ENCODE measurements at regions of chr4 and their contacts with region 1.

Region 1: DNA sequence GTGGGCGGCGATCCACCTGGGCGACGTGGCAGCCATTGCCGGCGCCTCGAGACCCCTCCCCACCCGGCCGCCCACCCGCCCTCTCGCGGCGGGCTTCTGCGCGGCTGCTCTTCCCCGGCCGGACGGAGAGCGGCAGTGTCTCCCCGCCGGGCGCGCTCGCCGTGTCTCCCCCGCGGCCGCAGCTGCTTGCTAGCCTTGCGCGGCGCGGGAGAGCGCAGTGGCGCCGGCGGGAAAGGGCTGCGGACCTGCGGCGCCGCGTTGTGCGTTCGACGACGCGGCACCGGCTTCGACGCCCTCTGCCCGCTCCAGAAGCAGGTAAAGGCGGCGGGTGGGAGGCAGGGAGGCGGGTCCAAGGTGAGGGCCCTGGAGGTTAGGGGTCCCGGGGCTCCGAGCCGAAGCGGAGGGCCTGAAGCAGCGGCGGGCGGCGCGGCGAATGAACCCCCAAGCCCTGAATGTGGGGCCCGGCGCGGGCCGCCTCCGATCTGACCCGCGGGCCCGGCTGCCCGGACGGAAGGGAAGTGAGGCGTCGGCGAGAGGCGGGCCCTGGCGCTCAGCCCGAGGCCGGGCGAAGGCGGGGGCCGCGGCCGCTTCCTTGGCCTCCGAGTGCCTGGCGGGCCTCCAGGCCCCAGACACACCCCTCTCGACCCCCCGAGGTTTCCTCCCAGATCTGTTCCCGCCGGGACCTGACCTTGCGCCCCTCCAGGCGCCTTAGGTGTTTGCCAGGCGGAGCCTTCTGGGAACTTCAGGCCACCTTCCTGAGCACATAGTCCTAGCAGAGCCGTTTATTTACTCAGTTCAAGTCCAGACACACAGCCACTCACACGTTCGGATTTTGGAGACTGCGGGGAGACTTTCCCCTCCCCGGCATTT is at the start of gene N4BP2:
- DNase-seq: peak; percentile 88
- ATAC-seq: peak; percentile 61
- H3K4me3 Mint-ChIP-seq: peak within 1 kb of the TSS; percentile 92
- H3K27ac Mint-ChIP-seq: peak within 1 kb of the TSS; percentile 100
- H3K4me1 Mint-ChIP-seq: peaks cover 30% of the 10 kb centered on the region
- H3K27me3 Mint-ChIP-seq: no peaks in the 10 kb centered on the region
- total RNA-seq, gene N4BP2: 16.2 to 23.2 TPM

Region 2: GRCh38 chr4:39205000-39205399 is 852.0 kb before region 1 on chr4:
- CTCF ChIA-PET with region 1: no interaction called
- POLR2A ChIA-PET with region 1: no interaction called
- intact Hi-C with region 1: no loop called
- DNase-seq: no peak
- ATAC-seq: no peak
- H3K4me3 Mint-ChIP-seq: no peak overlapping the region
- H3K27ac Mint-ChIP-seq: no peak overlapping the region
- H3K4me1 Mint-ChIP-seq: no peaks in the 10 kb centered on the region
- H3K27me3 Mint-ChIP-seq: no peaks in the 10 kb centered on the region

Region 3: DNA sequence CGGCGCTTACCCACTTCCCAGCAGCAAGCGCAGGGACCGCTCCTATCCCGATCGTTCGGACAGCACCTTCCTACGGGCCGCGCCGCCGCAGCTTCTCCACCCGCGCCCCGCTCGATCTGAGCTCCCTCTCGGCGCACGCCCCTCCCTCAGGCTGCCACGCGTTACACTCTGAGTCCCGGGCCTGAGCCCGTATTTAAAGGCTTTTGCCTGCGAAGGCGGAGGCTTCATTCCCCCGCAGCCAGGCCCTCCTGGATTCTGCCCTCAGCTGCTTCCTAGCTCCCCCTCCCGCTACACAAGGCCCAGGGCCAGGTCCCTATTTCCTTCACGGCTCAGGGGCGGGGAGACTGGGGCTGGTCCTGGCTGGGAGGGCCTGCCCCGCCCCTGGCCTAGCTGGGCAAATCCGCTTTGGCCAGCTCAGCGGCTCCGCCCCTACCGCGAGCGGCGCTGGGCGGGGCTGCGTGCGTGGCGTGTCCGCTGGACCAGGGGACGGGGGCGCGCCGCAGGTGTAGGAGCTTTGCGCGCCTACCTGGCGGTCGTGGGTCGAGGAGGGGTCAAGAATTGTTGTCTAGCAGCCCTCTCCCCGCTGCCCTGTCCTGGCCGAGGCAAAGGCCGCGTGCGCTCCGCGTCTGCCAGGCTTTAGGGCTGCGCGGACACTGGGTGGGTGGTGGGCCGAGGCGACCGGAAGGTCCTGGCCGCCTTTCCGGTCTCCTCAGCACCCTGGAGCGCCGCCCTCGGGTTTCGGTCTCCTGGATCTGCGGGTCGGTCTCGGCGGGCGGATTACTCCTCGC is 529.5 kb before region 1 on chr4 and contains the start of gene UGDH:
- CTCF ChIA-PET with region 1: no interaction called
- POLR2A ChIA-PET with region 1: no interaction called
- intact Hi-C with region 1: loop called in 1 of 2 experiments (anchors 2 kb)
- DNase-seq: peak; percentile 95
- ATAC-seq: peak; percentile 99
- H3K4me3 Mint-ChIP-seq: peak within 1 kb of the TSS; percentile 87
- H3K27ac Mint-ChIP-seq: peak within 1 kb of the TSS; percentile 97
- H3K4me1 Mint-ChIP-seq: peaks cover 16% of the 10 kb centered on the region
- H3K27me3 Mint-ChIP-seq: no peaks in the 10 kb centered on the region
- total RNA-seq, gene UGDH: 30.2 to 31.3 TPM

Region 4: DNA sequence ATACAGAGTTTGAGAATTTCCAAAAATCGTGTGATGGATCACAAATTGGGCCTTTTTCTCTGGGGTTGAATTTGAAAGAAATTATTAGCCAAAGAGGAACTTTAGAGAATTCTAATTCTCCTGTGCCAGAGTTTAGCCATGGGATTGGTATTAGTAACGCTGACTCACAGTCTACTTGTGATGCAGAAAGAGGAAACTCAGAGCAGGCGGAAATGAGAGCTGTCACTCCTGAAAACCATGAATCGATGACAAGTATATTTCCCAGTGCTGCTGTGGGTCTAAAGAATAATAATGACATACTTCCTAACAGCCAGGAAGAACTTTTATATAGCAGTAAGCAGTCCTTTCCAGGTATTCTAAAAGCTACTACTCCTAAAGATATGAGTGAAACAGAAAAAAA is 64.6 kb after region 1 on chr4:
- CTCF ChIA-PET with region 1: no interaction called
- POLR2A ChIA-PET with region 1: no interaction called
- intact Hi-C with region 1: loop called (anchors 2 to 5 kb)
- DNase-seq: peak; percentile 30
- ATAC-seq: peak; percentile 70
- H3K4me3 Mint-ChIP-seq: no peak overlapping the region
- H3K27ac Mint-ChIP-seq: no peak overlapping the region
- H3K4me1 Mint-ChIP-seq: peaks cover 53% of the 10 kb centered on the region
- H3K27me3 Mint-ChIP-seq: no peaks in the 10 kb centered on the region

Region 5: GRCh38 chr4:40309250-40309774 is 252.4 kb after region 1 on chr4:
- CTCF ChIA-PET with region 1: interaction called, 10 read pairs
- POLR2A ChIA-PET with region 1: interaction called, 4 read pairs
- intact Hi-C with region 1: loop called (anchors 1 to 2 kb)
- DNase-seq: peak; percentile 96
- ATAC-seq: peak; percentile 70
- H3K4me3 Mint-ChIP-seq: peak overlapping the region; percentile 71
- H3K27ac Mint-ChIP-seq: peak overlapping the region; percentile 95
- H3K4me1 Mint-ChIP-seq: peaks cover 86% of the 10 kb centered on the region
- H3K27me3 Mint-ChIP-seq: no peaks in the 10 kb centered on the region

Region 6: DNA sequence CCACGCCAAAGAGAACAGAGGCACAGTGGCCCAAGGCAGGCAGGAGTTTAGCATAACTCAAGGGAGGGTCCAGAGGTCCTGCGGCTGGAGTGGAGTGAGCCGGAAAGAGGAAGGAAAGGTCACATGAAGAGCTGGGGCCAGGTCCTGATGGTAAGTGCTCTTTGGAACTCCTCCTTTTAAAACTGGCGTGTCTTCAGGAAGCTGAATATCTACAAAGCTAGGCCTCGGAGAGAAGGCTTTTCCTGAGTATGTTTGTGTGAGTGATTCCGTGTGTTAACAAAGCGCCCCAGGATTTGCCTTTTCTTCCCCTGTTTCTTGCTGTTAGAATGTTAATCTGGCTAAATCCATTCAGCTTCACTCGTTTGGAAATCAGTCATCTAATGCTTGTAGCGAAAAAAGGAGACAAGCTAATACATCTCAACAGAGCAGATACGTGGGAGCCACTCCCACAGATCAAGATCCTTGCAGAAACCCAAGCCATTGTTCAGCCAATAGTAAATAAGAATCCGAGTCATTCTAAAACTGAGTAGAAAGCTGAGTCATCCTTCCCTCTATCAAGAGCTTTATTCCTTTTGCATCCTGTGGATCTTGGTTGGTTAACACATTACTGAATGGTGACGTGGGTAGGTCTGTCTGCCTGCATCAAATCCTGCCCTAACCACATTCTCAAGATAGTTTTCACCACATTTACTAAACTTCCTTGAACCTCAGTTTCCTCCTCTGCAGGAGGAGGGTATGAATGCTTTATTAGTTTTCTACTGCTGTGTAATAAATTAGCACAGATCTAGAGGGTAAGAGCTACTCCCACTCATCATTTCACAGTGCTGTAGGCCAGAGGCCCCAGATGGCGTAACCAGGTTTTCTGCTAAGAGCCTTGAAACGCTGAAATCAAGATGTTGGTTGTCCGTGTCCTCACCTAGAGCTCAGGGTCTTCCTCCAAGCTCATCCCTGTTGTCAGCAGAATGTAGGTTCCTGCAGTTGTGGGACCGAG is 615.9 kb after region 1 on chr4:
- CTCF ChIA-PET with region 1: no interaction called
- POLR2A ChIA-PET with region 1: no interaction called
- intact Hi-C with region 1: loop called in 1 of 2 experiments (anchors 5 kb)
- DNase-seq: peak; percentile 70
- ATAC-seq: peak; percentile 87
- H3K4me3 Mint-ChIP-seq: peak overlapping the region; percentile 57
- H3K27ac Mint-ChIP-seq: peak overlapping the region; percentile 93
- H3K4me1 Mint-ChIP-seq: peaks cover 63% of the 10 kb centered on the region
- H3K27me3 Mint-ChIP-seq: no peaks in the 10 kb centered on the region

Measured in activated CD4-positive, alpha-beta T cell treated with anti-CD3 and anti-CD28 coated beads for 36 hours (primary cell).